Breast epithelium (tissue), 4 donors: ENCODE measurements at regions of chr9 and their contacts with region 1.

Region 1: DNA sequence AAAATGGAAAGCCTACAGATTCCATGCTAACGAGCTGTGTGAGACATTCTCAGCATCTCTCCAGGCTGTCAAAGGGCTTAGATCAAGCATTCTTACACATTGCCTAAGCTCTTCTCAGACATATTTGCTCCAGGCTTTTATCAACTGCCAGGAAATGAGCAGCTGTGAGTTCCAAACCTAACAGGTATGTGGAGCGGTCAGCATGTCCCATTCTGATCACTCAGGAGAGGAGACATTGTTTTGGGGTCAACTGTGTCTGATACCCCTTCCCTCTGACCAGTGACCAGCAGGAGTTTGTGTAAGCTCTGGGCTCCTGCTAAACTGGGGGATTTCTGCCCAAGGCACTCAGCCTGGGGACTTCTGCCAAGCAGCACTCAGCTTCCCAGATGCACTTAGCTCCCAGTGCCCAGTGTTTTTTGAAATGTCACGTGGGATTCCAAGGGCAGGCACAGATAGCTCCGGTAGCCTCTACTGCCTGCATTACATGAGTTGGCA is 229.1 kb downstream of the SEC61B start:
- DNase-seq: no peak
- H3K4me3 ChIP-seq: no peak overlapping the region
- H3K27ac ChIP-seq: no peak overlapping the region
- H3K4me1 ChIP-seq: no peaks in the 10 kb centered on the region
- H3K27me3 ChIP-seq: no peaks in the 10 kb centered on the region
- CTCF ChIP-seq: no peak
- POLR2A ChIP-seq: no peak

Region 2: DNA sequence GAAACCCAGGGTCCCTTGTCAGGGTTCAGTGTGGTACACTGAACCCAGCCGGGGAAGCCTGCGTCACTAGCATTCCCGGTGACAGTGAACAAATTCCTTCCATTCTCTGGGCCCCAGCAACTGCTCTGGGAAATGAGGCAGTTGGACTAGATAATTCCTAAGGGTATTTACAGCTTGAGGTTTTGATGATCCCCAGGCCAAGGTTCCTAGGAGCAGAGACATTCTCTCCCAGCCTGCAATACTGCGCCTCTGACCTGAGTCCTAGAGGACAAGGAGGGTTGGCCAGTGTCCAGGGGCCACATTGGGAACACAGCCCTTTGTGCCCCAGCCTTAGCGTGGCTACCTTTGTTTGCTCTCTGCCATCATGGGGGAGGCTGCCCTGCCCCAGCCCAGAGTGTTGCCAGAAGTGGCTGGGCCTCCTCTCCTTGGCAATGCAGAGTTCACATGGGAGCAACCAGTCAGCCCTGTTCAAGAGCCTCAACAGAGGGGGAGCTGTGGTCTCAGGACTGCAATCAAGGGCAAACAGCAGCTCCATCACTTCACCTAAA is 50.9 kb before region 1 on chr9:
- intact Hi-C with region 1: loop called (anchors 10 kb)
- DNase-seq: no peak
- H3K4me3 ChIP-seq: no peak overlapping the region
- H3K27ac ChIP-seq: peak overlapping the region in 1 of 2 donors; percentile 32
- H3K4me1 ChIP-seq: no peaks in the 10 kb centered on the region
- H3K27me3 ChIP-seq: no peaks in the 10 kb centered on the region
- CTCF ChIP-seq: no peak
- POLR2A ChIP-seq: no peak

Region 3: GRCh38 chr9:99486684-99487083 is 35.5 kb after region 1 on chr9:
- intact Hi-C with region 1: loop called (anchors 2 kb)
- DNase-seq: no peak
- H3K4me3 ChIP-seq: no peak overlapping the region
- H3K27ac ChIP-seq: no peak overlapping the region
- H3K4me1 ChIP-seq: no peaks in the 10 kb centered on the region
- H3K27me3 ChIP-seq: no peaks in the 10 kb centered on the region
- CTCF ChIP-seq: no peak
- POLR2A ChIP-seq: no peak